ENCODE measurements at regions of chrX and their contacts with region 1.

Region 1: DNA sequence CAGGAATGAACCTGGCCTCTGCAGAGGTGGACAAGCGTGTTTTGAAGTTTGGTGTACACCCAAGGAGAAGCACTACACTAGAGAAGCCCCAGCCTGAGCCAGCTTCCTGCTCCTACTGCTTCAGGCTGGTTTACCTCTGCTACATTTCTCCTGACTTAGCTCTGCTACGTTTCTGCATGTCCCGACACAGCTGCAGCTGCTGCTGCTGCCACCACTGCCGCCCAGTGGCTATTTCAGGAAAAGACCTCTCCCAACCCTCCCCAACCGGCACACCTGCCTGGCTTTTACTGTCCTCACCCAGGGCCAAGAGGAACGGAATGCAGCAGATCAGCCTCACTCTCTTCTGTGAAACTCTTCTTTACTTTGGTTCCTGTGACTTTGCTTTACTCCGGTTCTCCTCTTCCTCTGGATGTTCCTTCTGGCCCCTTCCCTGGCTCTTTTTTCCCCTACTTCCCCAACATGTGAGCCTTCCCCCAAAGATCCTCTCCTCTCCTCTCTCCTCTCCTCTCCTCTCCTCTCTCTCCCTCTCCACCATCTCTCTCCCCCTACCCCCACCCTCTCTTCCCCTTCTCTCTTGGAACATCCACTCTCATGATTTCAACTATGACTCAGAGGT is 3.1 kb upstream of the P2RY4 start:
- DNase-seq: peak; percentile 72
- H3K4me3 Mint-ChIP-seq: no peak overlapping the region
- H3K27ac Mint-ChIP-seq: no peak overlapping the region
- H3K4me1 Mint-ChIP-seq: no peaks in the 10 kb centered on the region
- H3K27me3 Mint-ChIP-seq: peaks cover 15% of the 10 kb centered on the region
- CTCF ChIP-seq: peak; percentile 31

Region 2: DNA sequence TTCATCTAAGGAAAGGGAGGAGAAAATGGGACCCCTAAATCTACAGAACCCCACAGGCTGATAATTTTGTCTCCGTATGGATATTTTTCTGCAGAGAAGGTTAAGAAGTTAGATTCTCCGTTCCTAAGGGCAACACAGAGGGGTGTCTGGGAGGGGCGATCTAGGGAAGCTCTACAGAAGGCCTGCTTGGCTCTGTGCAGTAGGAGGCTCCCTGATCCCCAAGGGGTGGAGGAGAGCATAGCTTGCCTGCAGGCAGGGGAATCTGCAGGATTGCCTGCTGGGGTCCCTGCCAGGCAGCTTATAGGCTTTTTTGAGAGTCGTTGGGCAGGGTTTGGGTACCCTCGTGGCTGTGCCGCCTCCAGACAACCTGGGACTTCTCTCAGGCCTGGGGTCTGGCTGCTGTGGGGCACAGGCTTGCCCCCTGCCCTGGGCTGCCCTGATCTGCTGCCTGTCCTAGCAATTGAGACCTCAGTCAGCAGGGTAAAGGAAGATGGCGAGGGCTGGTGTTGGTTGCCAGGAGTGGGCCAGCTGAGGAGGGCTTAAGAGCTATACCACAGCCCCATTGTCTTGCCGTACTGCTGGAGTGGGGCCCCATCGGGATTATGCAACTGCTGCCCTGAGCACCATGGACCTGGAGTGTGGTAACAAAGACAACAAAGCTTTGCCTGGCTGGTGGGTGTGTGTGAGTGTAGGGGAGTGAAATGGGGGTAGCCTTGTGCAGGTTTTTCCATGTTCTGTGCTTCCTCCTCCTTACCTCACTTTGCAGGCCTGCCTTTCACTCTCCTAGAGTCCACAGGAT is 1360.2 kb before region 1 on chrX:
- CTCF ChIA-PET with region 1: no interaction called
- intact Hi-C with region 1: no loop called
- DNase-seq: no peak
- H3K4me3 Mint-ChIP-seq: no peak overlapping the region
- H3K27ac Mint-ChIP-seq: no peak overlapping the region
- H3K4me1 Mint-ChIP-seq: no peaks in the 10 kb centered on the region
- H3K27me3 Mint-ChIP-seq: no peaks in the 10 kb centered on the region
- CTCF ChIP-seq: no peak

Region 3: DNA sequence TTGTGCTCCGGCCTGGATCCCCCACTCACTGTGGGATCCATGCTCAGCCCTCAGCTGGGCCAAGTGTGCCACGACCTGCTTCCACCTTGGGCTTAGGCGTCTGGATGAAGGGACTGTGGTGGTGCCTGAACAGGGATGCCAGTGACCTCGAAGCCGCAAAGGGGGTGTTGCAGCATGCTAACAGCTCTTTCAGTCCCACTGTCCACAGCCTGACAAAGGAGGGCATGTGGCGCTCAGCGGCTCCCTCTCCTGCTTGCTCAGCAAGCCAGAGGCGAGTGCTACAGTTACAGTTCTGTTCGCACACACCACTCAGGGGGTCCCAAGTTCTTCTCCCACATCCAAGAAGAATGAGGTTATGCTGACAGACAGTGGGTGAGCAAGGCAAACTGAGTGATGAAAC is 135.0 kb before region 1 on chrX:
- CTCF ChIA-PET with region 1: no interaction called
- intact Hi-C with region 1: no loop called
- DNase-seq: no peak
- H3K4me3 Mint-ChIP-seq: no peak overlapping the region
- H3K27ac Mint-ChIP-seq: no peak overlapping the region
- H3K4me1 Mint-ChIP-seq: peaks cover 23% of the 10 kb centered on the region
- H3K27me3 Mint-ChIP-seq: no peaks in the 10 kb centered on the region
- CTCF ChIP-seq: no peak

Region 4: DNA sequence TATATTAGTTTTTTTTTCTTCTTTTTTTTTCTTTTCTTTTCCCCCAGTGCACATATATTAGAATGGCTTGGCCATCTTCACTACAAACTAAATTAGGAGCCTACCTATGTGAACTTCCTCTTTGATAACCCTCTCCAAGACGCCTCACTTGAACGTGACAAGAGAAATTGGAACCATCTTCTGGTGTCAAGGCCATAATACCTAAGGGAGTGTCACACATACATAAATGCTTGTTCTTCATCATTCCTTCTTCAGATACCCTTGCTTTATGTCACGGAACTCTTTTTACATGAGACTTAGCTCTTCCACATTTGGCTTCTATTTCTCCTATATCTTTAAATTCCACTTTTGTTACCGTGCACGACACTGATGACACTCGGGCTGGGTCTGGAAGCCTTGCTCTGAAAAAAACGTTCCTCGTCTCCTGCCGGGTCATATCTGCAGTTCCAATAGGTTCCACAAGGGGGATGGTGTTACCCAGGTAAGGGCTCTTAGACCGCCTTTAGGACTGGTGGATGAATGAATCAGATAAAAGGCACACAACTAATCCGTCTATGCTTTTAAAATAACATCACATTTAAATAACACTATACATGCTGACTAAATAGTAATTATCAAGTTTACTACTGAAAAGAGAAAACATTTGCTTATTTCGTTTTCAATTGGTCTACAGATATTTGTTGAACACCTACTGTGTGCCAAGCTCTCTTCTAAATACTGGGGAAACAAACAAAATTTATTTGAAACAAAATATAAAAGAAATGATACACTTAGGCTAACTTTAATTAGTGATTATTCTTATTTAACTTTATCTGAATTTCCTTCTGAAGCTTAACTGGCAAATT is 65.9 kb before region 1 on chrX:
- CTCF ChIA-PET with region 1: no interaction called
- intact Hi-C with region 1: loop called (anchors 1 kb)
- DNase-seq: peak; percentile 75
- H3K4me3 Mint-ChIP-seq: no peak overlapping the region
- H3K27ac Mint-ChIP-seq: no peak overlapping the region
- H3K4me1 Mint-ChIP-seq: peaks cover 8% of the 10 kb centered on the region
- H3K27me3 Mint-ChIP-seq: peaks cover 27% of the 10 kb centered on the region
- CTCF ChIP-seq: peak; percentile 46

Measured in Calu3 (cell line).